Posterior cingulate gyrus (tissue), 11 donors: ENCODE measurements at regions of chr4 and their contacts with region 1.

Region 1: GRCh38 chr4:10582059-10582686 is 102.4 kb downstream of the CLNK start:
- DNase-seq: peak in 6 of 10 donors; percentile 25 to 83 (median 42)

Region 2: GRCh38 chr4:10457255-10457801 is 124.8 kb before region 1 on chr4 and contains the start of gene ZNF518B:
- intact Hi-C with region 1: no loop called
- DNase-seq: peak in 9 of 10 donors; percentile 24 to 92 (median 48)

Region 3: GRCh38 chr4:10753336-10753735 is 171.2 kb after region 1 on chr4:
- intact Hi-C with region 1: no loop called
- DNase-seq: no peak

Region 4: DNA sequence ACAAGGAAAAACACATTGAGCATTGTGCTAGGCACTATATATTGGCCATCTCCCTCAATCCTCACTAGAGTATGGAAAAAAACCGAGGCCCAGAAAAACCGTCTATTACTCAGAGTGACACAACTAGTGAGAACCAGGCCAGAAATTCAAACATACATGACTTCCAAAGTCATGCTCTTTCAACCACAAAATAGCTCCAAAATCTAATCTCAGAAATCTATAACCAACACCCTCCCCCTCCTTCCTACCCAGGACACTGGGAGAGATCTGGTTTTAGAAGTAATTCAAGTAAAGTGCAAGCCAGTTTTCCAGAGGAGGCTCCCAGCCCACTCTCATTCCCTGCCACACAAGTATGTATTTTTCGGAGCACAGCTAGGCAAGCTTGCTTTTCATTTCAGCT is 838.9 kb after region 1 on chr4:
- intact Hi-C with region 1: loop called (anchors 2 kb)
- DNase-seq: no peak

Region 5: DNA sequence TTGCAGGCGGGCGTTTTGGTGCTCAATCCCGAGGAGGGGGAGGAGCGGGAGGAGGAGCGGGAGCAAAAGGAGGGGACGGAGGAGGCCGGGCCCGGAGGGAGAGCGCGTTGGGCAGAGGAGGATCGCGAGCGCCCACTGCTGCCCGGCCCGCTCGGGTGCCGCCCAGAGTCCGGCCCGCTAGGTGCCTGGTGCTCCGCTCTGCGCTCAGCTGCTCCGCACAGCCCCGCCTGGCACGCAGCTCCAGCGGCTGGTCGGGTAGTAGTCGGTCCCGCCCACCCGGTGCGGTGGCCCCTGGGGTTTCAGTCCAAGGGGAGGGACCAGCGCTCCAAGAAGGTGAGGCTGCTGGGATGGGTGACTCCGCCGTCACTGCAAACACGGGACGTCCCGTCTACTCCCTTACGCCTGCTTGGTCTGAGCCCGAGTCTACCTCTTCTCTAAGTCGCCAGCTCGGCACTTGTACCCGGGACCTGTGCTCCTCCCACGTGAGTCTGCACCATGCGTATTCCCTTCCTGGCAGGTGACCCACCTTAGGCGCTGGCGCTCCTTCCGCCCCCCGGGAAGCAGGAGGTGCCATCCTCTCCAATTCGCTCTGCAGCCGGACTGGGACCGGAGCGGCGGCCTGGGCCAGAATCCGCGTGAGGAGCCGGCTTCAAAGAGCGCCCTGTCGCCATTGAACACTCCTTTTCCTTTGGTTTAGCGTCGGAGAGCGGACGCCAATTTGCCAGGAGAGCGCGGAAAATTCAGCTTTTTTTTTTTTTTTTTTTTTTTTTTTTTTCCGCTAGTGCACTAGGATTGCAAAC is 846.9 kb after region 1 on chr4:
- intact Hi-C with region 1: loop called (anchors 2 kb)
- DNase-seq: peak; percentile 61 to 98 (median 82)

Region 6: GRCh38 chr4:11720292-11720691 is 1138.1 kb after region 1 on chr4:
- intact Hi-C with region 1: loop called (anchors 5 kb)
- DNase-seq: no peak